ENCODE measurements at regions of chr20 and their contacts with region 1.

Region 1: DNA sequence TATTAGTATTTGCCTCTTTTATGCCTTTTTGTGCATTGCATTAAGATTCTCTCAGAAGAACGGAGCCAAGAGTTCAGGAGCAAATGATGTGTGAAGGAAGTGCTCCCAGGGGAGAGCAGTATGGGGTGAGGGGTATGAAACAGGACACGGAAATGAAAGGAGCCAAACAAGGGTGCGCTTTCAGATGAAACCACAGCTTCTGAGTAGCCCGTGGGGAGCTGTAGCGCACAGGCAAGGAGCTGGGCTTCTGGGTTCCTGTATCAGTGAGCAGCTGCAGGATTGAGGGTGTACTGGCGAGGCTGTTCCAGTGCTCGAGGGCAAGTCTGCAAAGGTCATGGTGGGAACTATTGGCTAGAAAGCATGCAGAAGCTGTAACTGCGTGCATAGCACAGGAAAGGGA is 25.4 kb downstream of the ANKEF1 start:
- DNase-seq: peak in 1 of 2 donors; percentile 18
- H3K4me3 ChIP-seq: no peak overlapping the region
- H3K27ac ChIP-seq: no peak overlapping the region
- H3K4me1 ChIP-seq: no peaks in the 10 kb centered on the region
- H3K27me3 ChIP-seq: peaks cover 0 to 4% (median 0%) of the 10 kb centered on the region in 3 donors
- CTCF ChIP-seq: no peak
- EP300 ChIP-seq: no peak
- POLR2A ChIP-seq: no peak

Region 2: DNA sequence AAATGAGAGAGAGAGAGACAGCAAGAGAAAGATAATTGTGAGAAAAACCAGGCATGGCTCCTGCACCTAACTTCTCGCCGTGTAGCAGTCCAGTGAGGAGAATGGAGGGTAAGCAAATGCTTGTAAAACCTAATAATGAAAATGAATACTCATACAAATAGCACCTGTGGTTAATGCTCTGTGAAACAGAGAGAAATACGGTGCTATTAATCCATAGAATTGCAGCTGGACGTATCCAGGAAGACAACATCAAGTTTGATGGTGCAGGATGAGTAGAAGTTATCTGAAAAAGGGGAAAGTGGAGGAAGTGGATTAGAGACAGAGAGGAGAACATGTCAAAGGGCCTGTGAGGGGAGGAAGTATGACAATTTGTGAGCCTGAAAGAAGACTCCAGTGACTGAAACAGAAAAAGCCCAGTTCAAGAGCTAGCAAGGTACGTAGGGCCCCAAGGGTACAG is 131.9 kb before region 1 on chr20:
- intact Hi-C with region 1: no loop called
- DNase-seq: no peak
- H3K4me3 ChIP-seq: no peak overlapping the region
- H3K27ac ChIP-seq: no peak overlapping the region
- H3K4me1 ChIP-seq: no peaks in the 10 kb centered on the region
- H3K27me3 ChIP-seq: no peaks in the 10 kb centered on the region
- CTCF ChIP-seq: no peak
- EP300 ChIP-seq: no peak
- POLR2A ChIP-seq: no peak

Region 3: GRCh38 chr20:9978397-9979004 is 81.7 kb before region 1 on chr20:
- intact Hi-C with region 1: no loop called
- DNase-seq: peak in 1 of 2 donors; percentile 91
- H3K4me3 ChIP-seq: no peak overlapping the region
- H3K27ac ChIP-seq: no peak overlapping the region
- H3K4me1 ChIP-seq: peaks cover 0 to 6% (median 0%) of the 10 kb centered on the region in 4 donors
- H3K27me3 ChIP-seq: no peaks in the 10 kb centered on the region
- CTCF ChIP-seq: peak in 5 of 7 experiments; percentile 45 to 85 (median 71)
- EP300 ChIP-seq: no peak
- POLR2A ChIP-seq: no peak

Region 4: DNA sequence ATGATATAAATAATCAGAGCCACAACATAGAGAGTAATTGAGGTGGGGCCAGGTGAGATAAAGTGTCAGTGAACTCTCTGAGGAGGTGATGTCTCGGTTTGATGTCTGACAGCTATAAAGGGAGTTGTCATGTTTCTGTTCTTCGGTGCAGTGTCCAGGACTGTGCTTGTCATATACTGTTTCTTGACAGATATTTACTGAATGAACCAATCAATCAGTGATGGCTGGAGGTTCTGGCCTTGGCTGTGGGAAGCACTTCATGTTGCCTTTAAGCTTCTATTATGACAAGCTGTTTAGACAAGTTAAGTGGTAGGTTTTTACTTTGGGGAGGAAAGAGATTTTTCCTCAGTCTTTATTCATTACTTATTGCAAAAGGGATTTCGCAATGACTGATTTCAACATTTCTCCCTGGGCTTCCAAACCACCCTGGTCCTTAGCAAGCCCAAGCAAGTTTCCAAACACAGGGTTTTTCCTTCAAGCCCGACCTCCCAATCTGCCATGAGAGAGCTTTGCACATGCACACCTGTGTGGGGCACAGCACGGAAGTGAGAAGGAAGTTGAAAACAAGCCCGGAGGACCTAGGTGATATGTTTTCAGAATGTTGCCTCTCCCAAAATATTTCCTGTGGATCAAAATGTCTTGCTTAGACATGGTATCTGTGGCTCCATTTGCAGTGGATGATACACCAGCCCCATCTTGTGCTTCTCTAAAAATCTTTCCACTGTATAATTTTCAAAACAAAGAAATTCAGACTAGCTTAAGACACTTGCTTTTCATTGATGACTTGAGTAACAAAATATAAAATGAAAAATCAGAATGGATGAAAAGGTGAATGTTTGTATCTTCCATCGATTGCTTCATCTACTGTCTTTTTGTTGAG is 1290.1 kb after region 1 on chr20:
- intact Hi-C with region 1: loop called (anchors 10 kb)
- DNase-seq: peak in 1 of 2 donors; percentile 25
- H3K4me3 ChIP-seq: no peak overlapping the region
- H3K27ac ChIP-seq: no peak overlapping the region
- H3K4me1 ChIP-seq: no peaks in the 10 kb centered on the region
- H3K27me3 ChIP-seq: no peaks in the 10 kb centered on the region
- CTCF ChIP-seq: no peak
- EP300 ChIP-seq: no peak
- POLR2A ChIP-seq: no peak

Measured in stomach (tissue), 19 donors.